Endothelial cell of umbilical vein (primary cell): ENCODE measurements at regions of chr11 and their contacts with region 1.

Region 1: DNA sequence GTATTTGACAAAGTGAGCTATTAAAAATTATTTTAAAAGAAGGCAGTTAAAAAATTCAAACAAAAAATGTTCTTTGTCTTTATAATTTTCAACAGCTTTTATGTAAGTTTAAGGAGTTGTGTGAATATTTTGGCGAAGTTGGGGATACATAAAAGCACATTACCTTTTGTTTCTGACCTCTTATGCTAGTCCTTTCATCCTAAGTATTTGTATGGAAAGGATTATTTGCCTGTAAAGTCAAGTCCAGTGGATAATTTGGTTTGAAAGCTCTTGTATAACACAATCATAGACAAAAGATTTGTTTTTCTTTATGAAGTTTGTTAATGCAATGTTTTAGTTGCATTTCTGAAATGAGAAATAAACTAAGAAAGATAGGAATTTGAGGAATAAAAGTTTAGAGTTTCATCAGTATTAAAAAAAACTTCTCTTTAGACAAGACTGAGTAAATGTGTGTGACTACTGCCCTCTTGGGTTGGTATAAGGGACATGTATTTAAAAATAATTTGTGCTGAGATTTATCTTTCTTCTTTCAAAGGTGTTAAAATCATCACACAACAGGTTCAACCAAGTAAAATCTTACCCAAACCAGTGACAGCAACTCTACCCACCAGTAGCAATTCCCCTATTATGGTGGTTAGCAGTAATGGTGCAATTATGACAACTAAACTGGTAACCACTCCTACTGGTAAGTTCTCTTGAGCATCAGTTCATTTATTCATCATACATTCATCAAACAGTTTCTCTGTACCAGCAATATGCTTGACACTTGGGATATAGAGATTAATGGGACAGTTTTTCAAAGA is 68.2 kb downstream of the EMSY start:
- DNase-seq: peak; percentile 58
- H3K4me3 ChIP-seq: no peak overlapping the region
- H3K27ac ChIP-seq: no peak overlapping the region
- H3K4me1 ChIP-seq: peaks cover 10% of the 10 kb centered on the region
- H3K27me3 ChIP-seq: no peaks in the 10 kb centered on the region
- CTCF ChIP-seq: peak; percentile 14 to 15
- POLR2A ChIP-seq: no peak

Region 2: DNA sequence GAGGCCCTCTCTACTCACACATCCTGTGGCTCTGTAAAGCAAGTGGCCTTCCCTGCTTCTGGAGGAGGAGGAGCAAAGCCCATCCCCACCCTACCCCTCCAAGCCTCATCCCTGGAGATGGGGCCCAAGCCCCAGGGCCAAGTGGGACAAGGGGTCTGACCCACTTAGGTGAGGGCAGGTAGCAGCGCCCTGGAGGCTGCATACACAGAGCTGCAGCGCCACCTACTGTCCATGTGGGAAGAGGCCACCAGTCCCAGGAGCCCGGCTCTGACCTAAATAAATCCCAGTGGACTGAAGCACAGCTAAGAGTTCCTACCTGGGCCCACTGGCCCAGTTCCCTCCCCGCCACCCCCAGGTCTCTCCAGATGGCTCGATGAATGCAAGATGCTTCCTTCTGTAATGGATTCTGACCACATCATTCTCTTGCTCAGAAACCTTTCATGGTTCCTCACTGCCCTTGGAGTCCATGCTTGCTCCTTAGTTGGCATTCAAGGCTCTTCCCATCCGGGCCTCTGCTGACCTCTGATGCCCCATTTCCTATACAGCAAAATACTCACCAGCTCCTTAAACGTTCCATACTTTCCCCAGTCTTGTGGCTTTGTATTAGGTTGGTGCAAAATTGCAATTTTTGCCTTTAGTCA is 194.2 kb before region 1 on chr11:
- CTCF ChIA-PET with region 1: interaction called, 9 read pairs
- POLR2A ChIA-PET with region 1: no interaction called
- dilution Hi-C with region 1: no loop called
- intact Hi-C with region 1: loop called (anchors 1 kb)
- DNase-seq: peak; percentile 74
- H3K4me3 ChIP-seq: no peak overlapping the region
- H3K27ac ChIP-seq: no peak overlapping the region
- H3K4me1 ChIP-seq: no peaks in the 10 kb centered on the region
- H3K27me3 ChIP-seq: peaks cover 16 to 23% of the 10 kb centered on the region in 2 experiments
- CTCF ChIP-seq: peak; percentile 84 to 94
- POLR2A ChIP-seq: no peak

Region 3: DNA sequence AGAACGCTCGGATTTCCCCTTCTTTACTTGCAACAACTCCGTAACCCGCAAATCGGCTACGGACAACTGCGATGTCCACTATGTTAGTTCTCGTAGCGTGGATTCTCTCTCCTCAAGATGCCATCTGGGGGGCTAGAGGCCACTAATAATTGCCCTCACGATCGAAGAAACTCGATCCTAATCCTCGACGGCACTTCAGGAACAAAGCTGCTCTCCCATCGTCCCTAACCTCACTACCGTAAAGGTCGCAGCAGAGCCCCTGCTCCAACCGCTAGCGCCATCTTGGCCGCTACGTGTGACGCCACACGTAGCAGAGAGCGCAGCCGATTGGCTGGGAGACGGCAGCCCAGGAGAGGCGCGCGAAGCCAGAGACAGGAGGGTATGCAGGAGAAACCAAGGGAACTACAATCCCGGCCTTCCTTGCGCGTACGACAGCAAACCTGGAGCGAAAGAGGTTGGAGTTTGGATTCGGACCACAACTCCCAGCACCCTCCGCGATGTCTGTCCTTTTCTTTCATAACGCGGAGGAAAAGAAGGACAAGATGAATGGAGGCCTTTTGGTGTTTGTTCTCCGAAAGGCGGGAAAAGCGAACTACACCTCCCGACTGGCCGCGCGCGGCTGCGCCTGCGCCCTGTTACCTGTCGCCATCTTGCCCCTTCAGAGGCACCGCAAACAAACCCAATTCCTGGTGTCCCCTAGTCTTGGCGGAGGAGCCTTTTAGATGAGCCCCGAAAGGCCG is 68.5 kb before region 1 on chr11 and contains the start of gene EMSY:
- CTCF ChIA-PET with region 1: interaction called, 3 read pairs
- POLR2A ChIA-PET with region 1: no interaction called
- dilution Hi-C with region 1: no loop called
- intact Hi-C with region 1: loop called (anchors 2 kb)
- DNase-seq: peak; percentile 100
- H3K4me3 ChIP-seq: peak within 1 kb of the TSS; percentile 83 to 96 (median 89)
- H3K27ac ChIP-seq: peak within 1 kb of the TSS; percentile 94
- H3K4me1 ChIP-seq: peaks cover 12% of the 10 kb centered on the region
- H3K27me3 ChIP-seq: no peaks in the 10 kb centered on the region
- CTCF ChIP-seq: no peak
- POLR2A ChIP-seq: peak; percentile 98
- total RNA-seq, gene EMSY: 23.4 and 25.7 TPM in 2 replicates

Region 4: GRCh38 chr11:76588455-76589325 is 75.6 kb after region 1 on chr11:
- CTCF ChIA-PET with region 1: no interaction called
- POLR2A ChIA-PET with region 1: no interaction called
- dilution Hi-C with region 1: no loop called
- intact Hi-C with region 1: no loop called
- DNase-seq: peak; percentile 99
- H3K4me3 ChIP-seq: no peak overlapping the region
- H3K27ac ChIP-seq: peak overlapping the region; percentile 94
- H3K4me1 ChIP-seq: peaks cover 23% of the 10 kb centered on the region
- H3K27me3 ChIP-seq: no peaks in the 10 kb centered on the region
- CTCF ChIP-seq: no peak
- POLR2A ChIP-seq: peak; percentile 88